Dorsolateral prefrontal cortex (tissue), 120 donors: ENCODE measurements at regions of chr15 and their contacts with region 1.

Region 1: DNA sequence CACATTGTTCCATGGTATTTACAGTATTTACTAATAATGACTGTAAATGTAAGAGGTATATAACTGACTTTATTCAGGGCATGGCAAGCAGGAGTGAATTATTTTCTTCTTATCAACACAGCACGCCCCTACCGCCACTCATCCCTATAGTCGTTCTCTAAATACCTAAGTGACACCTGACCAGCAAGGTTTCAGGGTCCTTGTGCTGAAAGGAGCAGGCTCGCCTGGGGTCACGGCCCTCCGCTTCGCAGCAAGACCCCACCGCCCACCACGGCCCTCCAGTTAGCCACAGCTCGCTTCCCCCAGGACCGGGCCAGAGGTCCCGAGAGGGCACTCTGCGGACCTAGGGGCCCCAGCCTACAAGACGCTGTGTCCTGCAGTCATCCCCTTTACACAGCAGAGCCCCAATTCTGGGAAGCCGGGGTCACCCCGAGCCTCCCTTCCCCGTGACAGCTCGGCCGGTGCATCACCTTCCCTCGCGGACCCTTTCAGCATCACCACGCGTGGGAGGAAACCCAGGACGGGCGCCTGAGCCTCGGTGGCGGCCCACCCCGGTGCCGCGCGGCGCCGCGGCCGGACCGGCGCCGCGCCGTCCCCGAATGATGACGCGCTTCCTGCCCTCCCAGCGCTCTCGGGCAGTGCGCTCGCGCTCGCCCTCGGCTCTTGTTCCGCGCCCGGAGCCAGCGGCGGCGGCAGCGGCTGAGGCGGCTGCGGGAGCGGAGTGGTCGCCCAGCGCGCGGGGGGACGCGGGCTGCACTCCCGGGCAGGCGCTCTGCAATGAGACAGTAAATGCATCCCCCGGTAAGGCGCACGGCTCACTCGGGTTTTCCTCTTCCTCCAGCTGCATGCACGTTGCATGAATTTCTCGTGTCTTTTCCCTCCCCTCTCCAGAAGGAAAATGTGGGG is 225.1 kb upstream of the C2CD4B start:
- DNase-seq: peak; percentile 34 to 85 (median 60)
- H3K4me3 ChIP-seq: peak within 1 kb of the TSS; percentile 70 to 100 (median 94)
- H3K27ac ChIP-seq: peak within 1 kb of the TSS; percentile 4 to 93 (median 83)
- H3K27me3 ChIP-seq: no peaks in the 10 kb centered on the region
- CTCF ChIP-seq: peak in 16 of 56 donors; percentile 3 to 47 (median 14)

Region 2: DNA sequence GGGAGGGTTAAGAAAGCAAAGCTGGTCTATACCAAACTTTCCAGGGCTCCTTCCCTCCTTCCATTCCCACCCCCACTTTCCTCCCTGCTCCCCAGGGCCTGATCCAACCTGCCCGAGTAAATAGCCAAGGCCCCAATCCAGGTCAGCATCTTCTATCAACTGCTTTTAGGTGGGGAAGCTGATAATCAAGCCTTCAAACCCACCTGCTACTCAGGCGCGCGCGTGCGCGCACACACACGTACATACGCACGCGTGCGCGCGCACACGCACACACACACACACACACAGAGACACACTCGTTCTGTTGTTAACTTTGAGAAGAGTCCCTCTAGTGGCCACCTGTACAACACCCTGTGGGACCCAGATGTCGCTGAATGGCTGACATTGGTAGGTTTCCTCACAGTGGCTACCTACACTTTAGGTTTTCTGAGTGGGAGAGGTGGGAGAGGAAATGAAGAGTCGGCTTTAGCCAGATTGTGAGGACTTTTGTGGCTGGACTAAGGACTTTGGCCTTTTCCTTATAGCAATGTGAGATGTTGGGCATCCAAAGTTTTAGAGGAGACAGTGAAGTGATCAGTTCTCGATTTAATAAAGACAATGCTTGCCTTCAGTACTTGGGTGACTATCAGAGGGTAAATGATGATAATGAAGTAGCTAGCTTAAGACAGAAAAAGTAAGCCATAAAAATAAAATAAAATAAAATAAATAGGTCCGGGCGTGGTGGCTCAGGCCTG is 45.2 kb before region 1 on chr15:
- intact Hi-C with region 1: no loop called
- DNase-seq: peak in 1 of 10 donors; percentile 10
- H3K4me3 ChIP-seq: peak overlapping the region in 5 of 59 donors; percentile 9 to 28 (median 15)
- H3K27ac ChIP-seq: no peak overlapping the region
- H3K27me3 ChIP-seq: no peaks in the 10 kb centered on the region
- CTCF ChIP-seq: peak in 45 of 56 donors; percentile 14 to 52 (median 34)

Region 3: DNA sequence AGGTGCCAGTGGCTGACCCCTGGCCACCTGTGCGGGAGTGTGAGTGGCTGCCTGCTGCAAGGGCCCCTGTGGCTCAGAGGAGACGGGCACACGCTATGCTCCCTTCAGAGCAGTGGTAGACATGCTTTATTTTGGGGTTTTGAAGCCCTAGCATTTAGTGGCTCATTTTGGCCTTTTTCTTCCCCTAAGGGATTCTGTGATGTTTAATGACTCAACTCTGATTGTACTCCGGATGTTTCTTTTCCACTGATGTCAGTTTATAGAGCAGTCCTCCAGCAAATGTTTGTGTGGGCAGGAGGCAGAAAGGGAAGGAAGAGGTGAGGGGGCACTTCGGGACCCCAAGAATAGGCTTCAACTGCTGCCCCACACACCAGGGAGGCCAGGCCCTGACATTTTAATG is 63.8 kb after region 1 on chr15:
- intact Hi-C with region 1: loop called in 1 of 2 experiments (anchors 10 kb)
- DNase-seq: no peak
- H3K4me3 ChIP-seq: no peak overlapping the region
- H3K27ac ChIP-seq: peak overlapping the region in 12 of 59 donors; percentile 0 to 51 (median 34)
- H3K27me3 ChIP-seq: no peaks in the 10 kb centered on the region
- CTCF ChIP-seq: no peak

Region 4: DNA sequence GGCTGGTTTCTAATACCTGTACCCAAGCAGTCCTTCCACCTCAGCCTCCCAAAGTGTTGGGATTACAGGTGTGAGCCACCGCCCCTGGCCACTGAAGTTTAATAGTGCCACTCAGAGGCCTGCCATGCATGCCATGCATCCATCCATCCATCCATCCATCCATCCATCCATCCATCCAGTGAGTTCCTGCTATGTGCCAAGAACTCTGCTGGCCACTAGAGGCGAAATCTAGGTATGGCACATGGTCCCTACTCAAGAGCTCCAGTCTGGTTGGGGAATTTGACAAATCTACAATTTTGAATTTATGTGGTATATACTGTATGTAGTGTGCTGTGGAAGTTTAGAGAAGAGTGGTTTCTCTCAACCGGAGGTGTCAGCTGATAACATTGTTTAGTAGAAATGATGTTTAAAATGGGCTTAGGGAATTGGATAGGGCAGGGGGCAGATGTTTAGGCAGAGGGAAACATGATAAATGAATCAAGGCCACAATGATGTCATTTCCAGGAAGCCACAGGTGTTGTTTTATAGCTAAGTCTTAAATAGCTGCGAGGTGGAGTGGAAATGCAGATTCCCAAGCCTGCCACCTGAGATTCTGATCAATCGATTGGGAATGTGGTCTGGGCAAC is 159.3 kb after region 1 on chr15:
- intact Hi-C with region 1: loop called in 1 of 2 experiments (anchors 5 kb)
- DNase-seq: no peak
- H3K4me3 ChIP-seq: no peak overlapping the region
- H3K27ac ChIP-seq: no peak overlapping the region
- H3K27me3 ChIP-seq: no peaks in the 10 kb centered on the region
- CTCF ChIP-seq: peak in 46 of 56 donors; percentile 13 to 63 (median 38)

Region 5: GRCh38 chr15:62742409-62743171 is 352.5 kb after region 1 on chr15:
- intact Hi-C with region 1: loop called (anchors 2 to 5 kb)
- DNase-seq: peak in 6 of 10 donors; percentile 44 to 60 (median 54)
- H3K4me3 ChIP-seq: peak overlapping the region in 56 of 59 donors; percentile 4 to 65 (median 42)
- H3K27ac ChIP-seq: peak overlapping the region; percentile 30 to 95 (median 83)
- H3K27me3 ChIP-seq: no peaks in the 10 kb centered on the region
- CTCF ChIP-seq: peak; percentile 71 to 92 (median 83)